Ascending aorta (tissue), 2 donors: ENCODE measurements at regions of chr14 and their contacts with region 1.

Region 1: GRCh38 chr14:54440873-54441868 is at the start of gene CNIH1:
- DNase-seq: peak; percentile 44 to 94
- H3K4me3 ChIP-seq: peak within 1 kb of the TSS; percentile 66 to 82
- H3K27ac ChIP-seq: peak within 1 kb of the TSS; percentile 82 to 94
- H3K4me1 ChIP-seq: peaks cover 0 to 5% of the 10 kb centered on the region in 2 donors
- H3K27me3 ChIP-seq: no peaks in the 10 kb centered on the region
- CTCF ChIP-seq: peak; percentile 89 to 97 (median 95)
- total RNA-seq, gene CNIH1: 173 TPM

Region 2: DNA sequence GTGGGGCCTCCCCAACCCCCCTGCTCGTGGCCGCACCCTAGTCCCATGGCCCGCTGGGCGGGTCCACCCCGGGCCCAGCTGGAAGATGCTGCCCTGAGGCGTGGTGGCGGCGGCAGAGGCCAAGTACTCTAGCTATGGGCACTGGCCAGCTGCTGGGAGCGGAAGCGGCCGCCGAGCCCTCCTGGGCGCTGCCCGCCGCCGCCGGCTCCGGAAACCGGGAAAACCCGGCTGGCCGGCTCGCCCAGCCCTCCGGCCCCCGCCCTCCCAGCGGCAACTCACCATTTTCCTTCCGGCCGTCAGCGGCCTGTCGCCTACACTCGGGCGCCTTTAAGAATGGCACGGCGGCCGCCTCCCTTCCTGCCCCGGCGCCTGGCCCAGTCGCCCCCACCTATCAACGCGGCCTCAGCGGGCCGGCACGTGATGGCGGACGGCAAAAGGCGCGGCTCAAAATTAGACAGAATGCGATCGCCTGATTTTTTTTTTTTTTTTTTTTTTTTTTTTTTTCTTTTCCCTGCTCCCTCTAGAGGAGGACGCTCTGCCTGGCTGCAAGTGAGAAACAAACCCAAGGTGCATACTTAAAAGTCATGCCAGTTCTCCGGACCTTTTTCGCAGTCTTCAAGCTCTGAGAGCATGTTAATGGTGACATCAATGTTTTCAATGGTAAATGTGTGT is 47.6 kb after region 1 on chr14 and contains the start of gene GMFB:
- intact Hi-C with region 1: loop called (anchors 1 kb)
- DNase-seq: peak; percentile 74 to 95
- H3K4me3 ChIP-seq: peak within 1 kb of the TSS; percentile 74 to 84
- H3K27ac ChIP-seq: peak within 1 kb of the TSS; percentile 96 to 99
- H3K4me1 ChIP-seq: peaks cover 0 to 22% of the 10 kb centered on the region in 2 donors
- H3K27me3 ChIP-seq: no peaks in the 10 kb centered on the region
- CTCF ChIP-seq: peak in 2 of 3 experiments; percentile 33 to 45
- total RNA-seq, gene GMFB: 27.5 TPM